Sigmoid colon (tissue), 7 donors: ENCODE measurements at regions of chr3 and their contacts with region 1.

Region 1: DNA sequence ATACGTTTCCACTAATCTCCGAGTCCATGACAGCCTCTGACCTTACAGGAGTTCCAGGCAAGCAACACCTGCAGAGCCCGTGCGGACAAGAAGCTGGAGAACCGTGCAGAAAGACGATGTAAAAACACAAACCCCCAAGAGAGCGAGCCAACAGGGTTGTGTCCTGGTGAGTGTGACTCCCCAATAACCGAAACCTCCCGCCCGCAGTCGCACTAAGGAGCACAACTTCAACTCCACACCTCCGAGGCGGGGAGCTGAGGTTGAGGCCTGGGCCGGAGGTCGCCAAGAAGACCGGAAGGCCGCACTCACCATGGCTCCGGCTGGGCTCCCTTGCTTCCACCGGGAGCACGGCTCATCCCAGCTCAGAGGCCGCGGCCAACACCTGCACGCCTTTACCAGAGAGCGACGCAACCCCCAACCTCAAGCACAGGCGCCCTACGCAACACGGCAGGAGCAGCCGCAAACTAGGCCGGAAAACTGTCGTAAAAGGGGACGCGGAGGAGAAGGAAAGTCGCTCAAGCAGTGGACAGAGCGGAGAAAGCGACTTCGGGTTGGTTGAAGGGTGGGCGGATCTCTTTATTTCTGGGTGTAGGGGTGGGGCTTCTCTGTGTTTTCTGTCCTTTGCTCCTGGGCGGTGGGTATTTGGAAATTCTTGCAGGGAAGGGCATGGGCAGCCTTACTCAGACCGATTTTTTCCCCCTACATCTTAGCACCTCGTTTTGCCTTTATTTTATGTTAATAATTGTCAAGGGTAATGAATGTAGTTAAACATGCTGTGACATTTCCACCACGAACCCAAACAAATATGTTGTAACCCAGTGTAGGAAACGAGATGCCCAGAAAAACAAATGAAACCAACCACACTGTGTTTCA is at the start of gene DNAJC19:
- DNase-seq: peak; percentile 96
- H3K4me3 ChIP-seq: peak within 1 kb of the TSS; percentile 66 to 93 (median 80)
- H3K27ac ChIP-seq: peak within 1 kb of the TSS; percentile 83 to 89 (median 88)
- H3K4me1 ChIP-seq: peaks cover 0 to 29% (median 17%) of the 10 kb centered on the region in 4 donors
- H3K27me3 ChIP-seq: no peaks in the 10 kb centered on the region
- CTCF ChIP-seq: no peak
- EP300 ChIP-seq: no peak
- POLR2A ChIP-seq: peak; percentile 73 to 85
- total RNA-seq, gene DNAJC19: 34.3 to 89.2 (median 55.4) TPM

Region 2: GRCh38 chr3:180912304-180913296 is 76.9 kb before region 1 on chr3 and contains the start of gene FXR1:
- intact Hi-C with region 1: loop called (anchors 2 kb)
- DNase-seq: peak; percentile 91
- H3K4me3 ChIP-seq: peak within 1 kb of the TSS; percentile 66 to 96 (median 83)
- H3K27ac ChIP-seq: peak within 1 kb of the TSS; percentile 84 to 94 (median 88)
- H3K4me1 ChIP-seq: peaks cover 0 to 36% (median 28%) of the 10 kb centered on the region in 4 donors
- H3K27me3 ChIP-seq: no peaks in the 10 kb centered on the region
- CTCF ChIP-seq: peak; percentile 54 to 89 (median 66)
- EP300 ChIP-seq: no peak
- POLR2A ChIP-seq: peak; percentile 64 to 73
- total RNA-seq, gene FXR1: 126 to 217 (median 151) TPM

Region 3: DNA sequence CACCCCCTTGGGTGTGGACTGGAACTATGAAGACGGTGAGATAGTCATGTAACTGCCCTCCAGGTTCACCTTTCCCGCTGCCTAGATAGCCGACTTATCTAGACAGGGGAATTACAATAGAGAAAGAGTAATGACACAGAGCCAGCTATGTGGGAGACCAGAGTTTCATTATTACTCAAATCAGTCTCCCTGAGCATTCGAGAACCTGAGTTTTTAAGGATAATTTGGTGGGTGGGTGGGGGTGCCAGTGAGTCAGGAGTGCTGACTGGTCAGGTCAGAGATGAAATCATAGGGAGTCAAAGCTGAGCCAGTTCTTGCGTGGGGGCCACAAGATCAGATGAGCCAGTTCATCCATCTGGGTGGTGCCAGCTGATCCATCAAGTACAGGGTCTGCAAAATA is 19.7 kb after region 1 on chr3:
- intact Hi-C with region 1: no loop called
- DNase-seq: no peak
- H3K4me3 ChIP-seq: no peak overlapping the region
- H3K27ac ChIP-seq: no peak overlapping the region
- H3K4me1 ChIP-seq: no peaks in the 10 kb centered on the region
- H3K27me3 ChIP-seq: no peaks in the 10 kb centered on the region
- CTCF ChIP-seq: no peak
- EP300 ChIP-seq: no peak
- POLR2A ChIP-seq: no peak